ENCODE measurements at regions of chr10 and their contacts with region 1.

Region 1: DNA sequence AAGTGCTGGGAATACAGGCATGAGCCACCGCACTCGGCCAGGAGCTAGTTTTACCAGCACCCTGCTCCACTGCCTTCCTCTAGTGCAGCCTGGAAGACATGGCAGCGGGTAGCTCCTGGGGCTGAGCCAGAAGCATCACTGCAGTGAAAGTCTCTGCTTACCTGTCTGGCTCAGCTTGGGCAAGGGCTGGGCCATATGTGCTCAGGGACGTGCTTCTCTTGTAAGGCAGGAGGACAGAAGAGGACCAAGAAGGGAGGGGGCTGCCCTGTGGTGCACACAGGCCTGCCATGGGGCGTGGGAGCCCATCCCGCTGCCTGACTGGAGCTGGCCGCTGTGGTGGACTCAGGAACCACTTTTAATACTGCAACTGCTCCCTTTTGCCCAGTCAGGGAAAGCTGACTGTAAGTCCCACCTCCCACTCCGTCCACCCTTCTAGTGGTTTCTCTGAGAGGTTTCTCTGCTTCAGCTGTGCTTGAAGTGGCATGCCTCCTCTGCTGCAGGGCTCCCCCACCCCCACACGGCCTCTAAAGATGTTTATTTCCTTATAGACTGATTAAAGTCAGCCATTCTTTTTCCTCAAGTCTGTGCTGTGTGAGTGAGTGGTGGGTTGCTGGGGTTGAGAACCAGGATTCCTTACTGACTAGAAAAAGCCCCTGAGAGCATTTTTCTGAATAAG is 25.3 kb upstream of the C10orf95 start:
- DNase-seq: no peak
- H3K4me3 ChIP-seq: no peak overlapping the region
- H3K27ac ChIP-seq: no peak overlapping the region
- H3K4me1 ChIP-seq: no peaks in the 10 kb centered on the region
- H3K27me3 ChIP-seq: no peaks in the 10 kb centered on the region
- CTCF ChIP-seq: no peak
- EP300 ChIP-seq: no peak
- RAD21 ChIP-seq: no peak

Region 2: DNA sequence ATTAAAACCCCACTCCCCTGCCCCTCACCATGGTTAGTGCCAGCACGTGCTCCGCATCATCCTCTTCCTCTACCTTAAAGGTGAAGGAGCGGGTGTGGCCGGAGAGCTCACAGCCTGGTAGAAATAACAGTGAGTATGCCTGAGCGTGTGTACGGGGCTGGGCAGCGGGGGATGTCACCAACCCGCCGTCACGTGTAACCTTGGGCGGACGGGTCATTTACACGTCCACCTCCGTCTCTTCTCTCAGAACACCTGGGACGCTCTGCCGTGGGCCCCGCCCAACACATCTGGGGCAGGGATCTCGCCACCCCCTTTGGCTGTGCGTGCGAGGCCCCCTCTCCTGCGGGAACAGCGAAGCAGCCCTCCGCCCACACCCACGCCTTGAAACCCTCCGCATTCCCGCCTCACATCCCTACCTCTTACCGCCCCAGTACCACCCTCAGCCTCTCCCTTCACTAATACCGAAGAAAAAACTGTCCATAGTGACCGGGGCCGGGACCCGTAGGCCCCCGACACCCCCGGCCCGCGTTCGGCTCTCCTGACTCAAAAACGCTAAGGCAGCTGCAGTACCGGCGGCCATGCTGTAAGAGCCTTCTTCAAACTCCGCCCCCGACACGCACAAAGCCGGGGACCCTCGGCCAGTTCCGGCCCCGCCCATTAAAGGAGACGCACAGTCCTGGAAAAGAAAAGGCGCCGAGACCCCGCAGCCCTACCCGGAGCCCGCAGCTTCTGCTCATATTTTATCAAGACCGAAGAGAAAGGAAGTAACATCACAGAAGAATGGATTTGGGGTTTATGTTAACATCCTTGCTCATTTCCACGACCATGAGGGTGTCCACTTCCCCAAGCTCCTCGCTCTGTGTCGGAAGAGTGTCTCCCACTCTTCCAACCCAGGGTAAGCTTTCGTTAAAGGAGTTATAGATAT is 693.5 kb before region 1 on chr10 and contains the start of gene NPM3:
- CTCF ChIA-PET with region 1: no interaction called
- POLR2A ChIA-PET with region 1: no interaction called
- DNase-seq: peak; percentile 94
- H3K4me3 ChIP-seq: peak within 1 kb of the TSS; percentile 77 to 96
- H3K27ac ChIP-seq: peak within 1 kb of the TSS; percentile 70 to 72
- H3K4me1 ChIP-seq: peaks cover 8 to 23% of the 10 kb centered on the region in 2 experiments; a peak in 3 of 4 replicates
- H3K27me3 ChIP-seq: no peaks in the 10 kb centered on the region
- CTCF ChIP-seq: no peak
- EP300 ChIP-seq: no peak
- RAD21 ChIP-seq: no peak
- polyA plus RNA-seq, gene NPM3: 89.3 and 105 TPM in 2 replicates

Region 3: DNA sequence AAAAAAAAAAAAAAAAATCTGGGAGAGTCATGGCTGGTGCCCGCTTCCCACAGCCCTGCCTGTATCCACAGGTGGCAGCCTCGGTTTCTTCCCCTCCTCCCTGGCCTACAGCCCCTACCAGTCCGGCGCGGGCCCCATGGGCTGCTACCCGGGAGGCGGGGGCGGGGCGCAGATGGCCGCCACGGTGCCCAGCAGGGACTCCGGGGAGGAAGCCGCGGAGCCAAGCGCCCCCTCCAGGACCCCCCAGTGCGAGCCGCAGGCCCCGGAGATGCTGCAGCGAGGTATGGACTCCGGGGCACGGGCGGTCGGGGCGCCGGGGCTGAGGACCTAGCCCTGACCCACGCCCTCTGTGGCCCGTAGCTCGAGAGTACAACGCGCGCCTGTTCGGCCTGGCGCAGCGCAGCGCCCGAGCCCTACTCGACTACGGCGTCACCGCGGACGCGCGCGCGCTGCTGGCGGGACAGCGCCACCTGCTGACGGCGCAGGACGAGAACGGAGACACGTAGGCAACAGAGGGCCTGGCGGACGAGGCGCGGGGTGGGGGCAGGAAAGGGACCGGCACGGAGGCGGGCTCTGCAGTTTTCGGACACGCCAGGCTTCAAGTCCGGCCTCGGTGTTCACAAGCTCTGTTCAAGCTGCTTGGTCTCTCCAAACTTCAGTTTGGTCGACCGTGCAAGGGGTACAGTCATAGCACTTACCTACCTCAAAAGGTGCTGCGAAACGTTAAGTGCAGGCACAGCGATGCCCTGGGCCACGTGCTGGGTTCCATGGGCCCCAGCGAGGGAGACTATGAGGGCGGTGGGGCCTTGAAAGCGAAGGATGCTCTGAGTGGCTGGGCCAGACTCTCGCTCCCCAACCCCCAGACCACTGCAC is 77.2 kb before region 1 on chr10:
- CTCF ChIA-PET with region 1: interaction called, 28 read pairs
- POLR2A ChIA-PET with region 1: interaction called, 4 read pairs
- DNase-seq: peak; percentile 95
- H3K4me3 ChIP-seq: peak overlapping the region; percentile 49 to 64
- H3K27ac ChIP-seq: peak overlapping the region in 1 of 2 experiments; percentile 71; a peak in 1 of 4 replicates
- H3K4me1 ChIP-seq: peaks cover 0 to 23% of the 10 kb centered on the region in 2 experiments; a peak in 1 of 4 replicates
- H3K27me3 ChIP-seq: no peaks in the 10 kb centered on the region
- CTCF ChIP-seq: peak; percentile 87
- EP300 ChIP-seq: no peak
- RAD21 ChIP-seq: peak; percentile 55

Region 4: DNA sequence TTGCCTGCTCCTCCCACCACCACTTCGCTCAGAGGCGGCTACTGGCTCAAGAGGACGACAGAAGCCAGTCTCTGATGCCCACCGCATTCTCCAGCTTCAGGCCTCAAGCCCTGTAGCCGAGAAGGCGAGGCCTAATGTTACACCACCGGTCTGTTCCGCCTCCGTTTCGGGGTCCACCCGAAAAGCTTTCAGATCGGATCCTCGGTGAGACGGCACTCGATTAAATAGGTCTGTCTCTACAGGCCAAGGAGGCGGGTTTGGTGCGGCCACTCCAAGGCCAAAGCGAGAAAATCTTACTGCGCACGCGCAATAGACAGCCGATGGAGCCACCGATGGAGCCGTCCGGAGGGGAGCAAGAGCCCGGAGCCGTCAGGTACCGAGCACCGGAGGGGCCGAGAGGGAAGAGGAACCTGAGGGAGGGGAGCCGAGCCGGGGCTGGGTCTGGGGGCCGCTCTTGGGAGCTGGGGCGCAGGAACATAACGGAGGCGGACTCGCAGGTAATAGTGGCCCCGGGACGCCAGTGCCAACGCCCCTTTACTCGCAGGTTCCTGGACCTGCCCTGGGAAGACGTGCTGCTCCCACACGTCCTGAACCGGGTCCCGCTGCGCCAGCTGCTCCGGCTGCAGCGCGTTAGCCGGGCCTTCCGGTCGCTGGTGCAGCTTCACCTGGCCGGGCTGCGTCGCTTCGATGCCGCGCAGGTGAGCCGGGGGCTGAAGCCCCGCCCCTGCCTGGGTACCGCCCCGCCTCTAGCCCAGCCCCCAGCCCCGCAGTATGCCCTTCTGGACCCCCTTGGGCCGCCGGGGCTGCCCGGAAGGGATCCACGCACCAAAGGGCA is 55.6 kb before region 1 on chr10 and contains the start of gene FBXL15:
- CTCF ChIA-PET with region 1: interaction called, 21 read pairs
- POLR2A ChIA-PET with region 1: no interaction called
- DNase-seq: peak; percentile 91
- H3K4me3 ChIP-seq: peak within 1 kb of the TSS; percentile 77 to 90
- H3K27ac ChIP-seq: peak within 1 kb of the TSS; percentile 78 to 99
- H3K4me1 ChIP-seq: peaks cover 0 to 29% of the 10 kb centered on the region in 2 experiments; a peak in 2 of 4 replicates
- H3K27me3 ChIP-seq: no peaks in the 10 kb centered on the region
- CTCF ChIP-seq: no peak
- EP300 ChIP-seq: no peak
- RAD21 ChIP-seq: no peak
- polyA plus RNA-seq, gene FBXL15: 11.7 and 17.2 TPM in 2 replicates

Region 5: GRCh38 chr10:102493771-102494170 is 17.2 kb after region 1 on chr10:
- CTCF ChIA-PET with region 1: interaction called, 14 read pairs
- POLR2A ChIA-PET with region 1: no interaction called
- DNase-seq: no peak
- H3K4me3 ChIP-seq: no peak overlapping the region
- H3K27ac ChIP-seq: no peak overlapping the region
- H3K4me1 ChIP-seq: no peaks in the 10 kb centered on the region; a peak in 1 of 4 replicates
- H3K27me3 ChIP-seq: no peaks in the 10 kb centered on the region
- CTCF ChIP-seq: no peak
- EP300 ChIP-seq: no peak
- RAD21 ChIP-seq: no peak

Measured in SK-N-SH (cell line).